Activated naive CD4-positive, alpha-beta T cell treated with anti-CD3 and anti-CD28 coated beads, Interleukin-2, amount 10 ng/mL, durations not matched to agents 7 days and 5 days (primary cell): ENCODE measurements at regions of chr18 and their contacts with region 1.

Region 1: DNA sequence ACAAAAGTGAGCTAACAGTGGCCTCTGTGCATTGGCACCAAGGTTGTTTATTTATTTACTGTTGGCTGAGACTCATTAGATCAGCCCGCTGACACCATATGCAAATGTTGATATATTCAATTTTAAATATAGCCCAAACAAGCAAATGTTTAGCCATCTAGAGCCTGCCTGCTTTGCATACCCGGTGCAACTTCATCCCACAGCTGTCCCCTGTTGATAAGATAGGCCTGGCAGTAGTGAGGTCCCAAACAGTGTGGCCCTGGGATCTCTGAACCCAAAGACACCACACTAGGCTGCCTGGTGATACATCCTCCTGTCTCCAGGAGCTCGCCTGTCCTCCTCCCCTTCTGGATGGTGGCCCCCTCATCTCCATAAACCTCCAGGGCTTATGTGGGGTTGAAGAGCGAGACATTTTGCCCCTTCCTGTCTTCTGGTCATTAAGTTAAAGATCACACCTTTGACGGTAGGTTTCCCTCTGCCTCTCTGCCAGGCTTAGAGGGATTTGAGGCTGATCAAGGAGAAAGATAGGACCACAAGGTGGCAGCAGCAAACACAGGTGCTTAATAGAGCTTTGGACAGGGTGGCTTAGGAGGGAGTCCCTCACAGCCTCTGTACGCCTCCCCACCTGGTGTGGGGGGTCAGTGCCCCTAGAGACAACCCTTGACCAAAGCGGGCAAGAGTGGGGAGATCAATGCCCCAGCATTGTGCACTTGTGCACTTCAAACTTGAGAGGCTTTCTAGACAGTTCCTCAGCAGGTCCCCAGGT is 23.7 kb upstream of the MYO5B start:
- DNase-seq: peak; percentile 56
- H3K4me3 Mint-ChIP-seq: no peak overlapping the region
- H3K27ac Mint-ChIP-seq: no peak overlapping the region
- H3K4me1 Mint-ChIP-seq: no peaks in the 10 kb centered on the region
- H3K27me3 Mint-ChIP-seq: peaks cover 11% of the 10 kb centered on the region

Region 2: DNA sequence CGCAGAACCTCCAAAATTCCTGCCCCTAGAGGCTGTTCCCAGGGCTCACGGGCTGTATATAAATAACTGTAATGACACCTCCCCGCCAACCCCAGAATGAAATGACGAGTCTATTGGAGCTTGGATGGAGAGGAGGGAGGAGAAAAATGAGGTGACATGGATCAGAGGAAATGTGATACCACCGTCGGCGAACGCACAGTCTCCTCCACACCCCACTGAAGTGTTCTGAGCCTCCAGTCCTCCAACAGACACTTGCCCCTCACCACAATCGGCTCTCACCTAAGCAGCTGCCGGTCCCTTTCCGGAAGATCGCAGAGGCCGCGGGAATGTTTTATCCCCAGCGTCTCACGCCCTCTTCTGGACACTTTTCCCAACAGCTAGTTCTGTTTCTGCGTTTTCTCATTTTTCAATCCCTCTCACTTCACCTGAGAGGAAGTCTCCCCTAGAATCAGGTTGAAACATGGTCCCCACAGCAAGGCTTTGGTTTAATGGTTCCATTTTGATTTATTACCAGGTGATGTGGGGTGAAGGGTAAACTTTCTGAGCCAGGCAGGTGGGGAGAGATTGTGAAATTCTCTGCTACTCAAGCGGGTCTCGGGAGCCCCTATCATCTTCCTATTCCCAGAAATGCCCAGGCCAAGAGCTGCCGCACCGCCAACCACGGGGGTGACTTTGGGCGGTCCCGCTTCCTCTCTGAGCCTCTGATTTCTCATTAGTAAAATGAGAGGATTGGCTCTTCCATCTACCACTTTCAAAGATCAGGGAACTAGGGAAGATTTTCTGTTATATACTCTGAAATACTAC is 14.6 kb before region 1 on chr18:
- CTCF ChIA-PET with region 1: interaction called, 10 read pairs
- DNase-seq: peak; percentile 36
- H3K4me3 Mint-ChIP-seq: no peak overlapping the region
- H3K27ac Mint-ChIP-seq: no peak overlapping the region
- H3K4me1 Mint-ChIP-seq: peaks cover 2% of the 10 kb centered on the region
- H3K27me3 Mint-ChIP-seq: peaks cover 61% of the 10 kb centered on the region

Region 3: DNA sequence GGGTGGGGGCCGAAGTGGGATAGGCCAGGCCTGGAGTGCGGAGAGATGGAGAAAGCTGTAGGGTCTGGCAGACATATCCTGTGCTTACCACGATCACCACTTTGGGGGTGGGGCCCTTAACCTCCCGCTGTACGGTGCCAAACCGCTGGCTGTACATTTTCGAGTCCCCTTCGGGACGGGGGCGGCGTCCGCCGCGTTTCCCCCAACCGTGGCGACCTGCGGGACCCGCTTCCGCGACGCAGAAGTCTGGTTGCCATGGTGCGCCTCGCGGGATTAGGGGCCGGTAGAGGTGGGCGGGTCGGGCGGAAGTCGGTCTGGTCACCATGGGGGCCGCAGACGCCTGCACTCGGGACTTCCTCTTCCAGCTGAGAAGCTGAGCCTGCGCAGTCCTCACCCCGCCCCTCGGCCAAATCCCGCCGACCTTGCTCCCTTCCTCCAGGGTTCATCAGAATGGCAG is 47.7 kb after region 1 on chr18 and contains the start of gene CFAP53:
- CTCF ChIA-PET with region 1: interaction called, 10 read pairs
- DNase-seq: peak; percentile 92
- H3K4me3 Mint-ChIP-seq: peak within 1 kb of the TSS; percentile 77
- H3K27ac Mint-ChIP-seq: peak within 1 kb of the TSS; percentile 20
- H3K4me1 Mint-ChIP-seq: peaks cover 29% of the 10 kb centered on the region
- H3K27me3 Mint-ChIP-seq: peaks cover 4% of the 10 kb centered on the region

Region 4: DNA sequence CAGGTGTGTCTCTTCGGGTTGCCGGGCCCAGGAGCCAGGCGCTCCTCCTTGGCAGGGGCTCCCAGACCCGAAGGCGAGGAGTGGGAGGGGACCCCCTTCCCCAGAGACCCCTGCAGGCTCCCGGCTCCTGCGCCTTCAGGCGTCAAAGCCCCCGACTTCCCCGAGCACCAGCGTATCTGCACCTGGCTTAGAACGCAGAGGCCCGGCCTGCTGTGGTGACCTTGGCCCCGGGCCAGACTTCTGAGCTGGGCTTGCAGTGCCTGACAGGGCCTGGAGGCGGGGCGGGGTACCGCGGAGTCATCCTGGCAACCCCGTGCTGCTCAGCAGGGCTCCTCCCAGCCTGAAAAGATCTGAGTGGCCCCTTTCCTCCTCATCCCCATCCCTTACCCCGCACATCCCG is 183.3 kb after region 1 on chr18:
- CTCF ChIA-PET with region 1: no interaction called
- DNase-seq: no peak
- H3K4me3 Mint-ChIP-seq: no peak overlapping the region
- H3K27ac Mint-ChIP-seq: no peak overlapping the region
- H3K4me1 Mint-ChIP-seq: no peaks in the 10 kb centered on the region
- H3K27me3 Mint-ChIP-seq: peaks cover 75% of the 10 kb centered on the region

Region 5: GRCh38 chr18:50429207-50429948 is 210.8 kb after region 1 on chr18:
- CTCF ChIA-PET with region 1: interaction called, 13 read pairs
- DNase-seq: no peak
- H3K4me3 Mint-ChIP-seq: no peak overlapping the region
- H3K27ac Mint-ChIP-seq: no peak overlapping the region
- H3K4me1 Mint-ChIP-seq: no peaks in the 10 kb centered on the region
- H3K27me3 Mint-ChIP-seq: peaks cover 23% of the 10 kb centered on the region